ENCODE measurements at regions of chr7 and their contacts with region 1.

Region 1: GRCh38 chr7:116809636-116810266 is 52.6 kb upstream of the CAPZA2 start:
- DNase-seq: peak; percentile 59
- H3K4me3 ChIP-seq: no peak overlapping the region
- H3K27ac ChIP-seq: no peak overlapping the region
- H3K4me1 ChIP-seq: no peaks in the 10 kb centered on the region
- CTCF ChIP-seq: peak; percentile 86

Region 2: GRCh38 chr7:116258734-116259133 is 551.0 kb before region 1 on chr7:
- CTCF ChIA-PET with region 1: no interaction called
- POLR2A ChIA-PET with region 1: interaction called, 6 read pairs
- intact Hi-C with region 1: loop called (anchors 2 kb)
- DNase-seq: peak; percentile 45
- H3K4me3 ChIP-seq: no peak overlapping the region
- H3K27ac ChIP-seq: no peak overlapping the region
- H3K4me1 ChIP-seq: no peaks in the 10 kb centered on the region
- CTCF ChIP-seq: peak; percentile 91

Measured in OCI-LY7 (cell line).